Transverse colon (tissue), 4 donors: ENCODE measurements at regions of chr3 and their contacts with region 1.

Region 1: GRCh38 chr3:114383875-114384557 is 90.2 kb downstream of the TIGIT start:
- DNase-seq: peak; percentile 77
- H3K4me3 ChIP-seq: peak overlapping the region in 3 of 4 donors; percentile 19 to 44 (median 28)
- H3K27ac ChIP-seq: peak overlapping the region; percentile 60 to 83 (median 77)
- H3K4me1 ChIP-seq: peaks cover 0 to 37% (median 7%) of the 10 kb centered on the region in 4 donors
- H3K27me3 ChIP-seq: no peaks in the 10 kb centered on the region
- CTCF ChIP-seq: peak; percentile 81 to 94 (median 88)
- EP300 ChIP-seq: no peak
- POLR2A ChIP-seq: no peak

Region 2: DNA sequence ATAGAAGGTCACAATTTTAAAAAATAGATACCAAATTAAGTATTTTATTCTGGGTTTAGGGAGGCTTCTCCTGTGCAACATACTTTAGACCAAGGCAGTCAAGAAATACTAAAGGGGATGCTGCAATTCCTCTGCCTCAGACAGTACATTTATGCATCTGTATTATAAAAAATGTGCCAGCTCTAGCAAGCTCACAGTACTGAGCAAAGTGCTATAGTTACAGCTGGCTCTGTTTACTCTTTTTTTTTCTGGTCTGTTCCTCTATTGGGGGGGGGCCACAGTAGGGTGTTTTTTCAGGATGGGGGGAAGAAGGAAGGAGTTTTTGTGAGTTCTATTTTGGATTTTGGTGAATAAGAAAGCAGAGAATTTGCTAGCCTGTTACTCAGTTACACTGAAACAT is 94.8 kb after region 1 on chr3:
- in situ Hi-C with region 1: no loop called
- intact Hi-C with region 1: loop called (anchors 10 kb)
- DNase-seq: no peak
- H3K4me3 ChIP-seq: no peak overlapping the region
- H3K27ac ChIP-seq: no peak overlapping the region
- H3K4me1 ChIP-seq: no peaks in the 10 kb centered on the region
- H3K27me3 ChIP-seq: no peaks in the 10 kb centered on the region
- CTCF ChIP-seq: no peak
- EP300 ChIP-seq: no peak
- POLR2A ChIP-seq: no peak

Region 3: DNA sequence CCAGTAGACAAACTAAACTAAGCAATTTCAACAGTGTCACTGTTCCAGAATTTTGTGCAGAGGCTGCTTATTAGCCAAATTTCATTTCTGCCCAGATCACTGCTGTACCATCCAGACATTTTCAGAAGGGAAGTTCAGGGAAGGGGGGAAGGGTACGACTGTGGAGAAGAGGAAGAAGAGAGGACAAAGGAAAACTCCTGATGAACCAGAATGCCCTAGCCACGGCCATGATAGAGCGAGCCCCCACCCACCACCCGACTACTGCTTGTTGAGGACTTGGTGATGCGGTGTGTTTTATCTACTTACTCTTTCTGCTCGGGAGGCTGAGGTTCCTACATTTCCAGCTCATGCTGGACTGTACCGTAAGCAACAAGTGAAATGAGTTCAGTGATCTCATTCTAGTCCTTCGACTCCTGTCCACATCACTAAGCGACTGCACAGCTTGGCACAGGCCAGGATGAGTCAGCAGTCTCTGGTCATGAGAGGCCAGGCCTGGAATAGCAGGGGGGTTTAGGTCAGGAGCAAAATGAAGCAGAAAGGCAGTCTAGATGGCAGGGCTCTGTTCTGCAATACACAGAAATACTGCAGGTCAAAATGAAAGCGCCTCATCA is 240.7 kb after region 1 on chr3:
- in situ Hi-C with region 1: no loop called
- intact Hi-C with region 1: loop called (anchors 2 kb)
- DNase-seq: peak; percentile 74
- H3K4me3 ChIP-seq: peak overlapping the region; percentile 1 to 38 (median 22)
- H3K27ac ChIP-seq: peak overlapping the region; percentile 87 to 91 (median 90)
- H3K4me1 ChIP-seq: peaks cover 4 to 26% (median 6%) of the 10 kb centered on the region in 4 donors
- H3K27me3 ChIP-seq: no peaks in the 10 kb centered on the region
- CTCF ChIP-seq: no peak
- EP300 ChIP-seq: no peak
- POLR2A ChIP-seq: peak; percentile 69